ENCODE measurements at regions of chr3 and their contacts with region 1.

Region 1: GRCh38 chr3:142828703-142829305 is 60.1 kb downstream of the PCOLCE2 start:
- DNase-seq: peak; percentile 70
- ATAC-seq: peak; percentile 100
- H3K4me3 ChIP-seq: no peak overlapping the region
- H3K27ac ChIP-seq: no peak overlapping the region
- H3K4me1 ChIP-seq: no peaks in the 10 kb centered on the region
- H3K27me3 ChIP-seq: peaks cover 15% of the 10 kb centered on the region
- CTCF ChIP-seq: peak; percentile 82
- POLR2A ChIP-seq: no peak
- RAD21 ChIP-seq: peak; percentile 87

Region 2: GRCh38 chr3:142418926-142419592 is 409.7 kb before region 1 on chr3:
- CTCF ChIA-PET with region 1: no interaction called
- POLR2A ChIA-PET with region 1: no interaction called
- dilution Hi-C with region 1: no loop called
- in situ Hi-C with region 1: no loop called
- intact Hi-C with region 1: no loop called
- DNase-seq: no peak
- ATAC-seq: no peak
- H3K4me3 ChIP-seq: no peak overlapping the region
- H3K27ac ChIP-seq: no peak overlapping the region
- H3K4me1 ChIP-seq: no peaks in the 10 kb centered on the region
- H3K27me3 ChIP-seq: no peaks in the 10 kb centered on the region
- CTCF ChIP-seq: no peak
- POLR2A ChIP-seq: no peak
- RAD21 ChIP-seq: no peak

Region 3: GRCh38 chr3:142467768-142468167 is 361.0 kb before region 1 on chr3:
- CTCF ChIA-PET with region 1: no interaction called
- POLR2A ChIA-PET with region 1: no interaction called
- dilution Hi-C with region 1: no loop called
- in situ Hi-C with region 1: no loop called
- intact Hi-C with region 1: no loop called
- DNase-seq: no peak
- ATAC-seq: no peak
- H3K4me3 ChIP-seq: no peak overlapping the region
- H3K27ac ChIP-seq: no peak overlapping the region
- H3K4me1 ChIP-seq: no peaks in the 10 kb centered on the region
- H3K27me3 ChIP-seq: no peaks in the 10 kb centered on the region
- CTCF ChIP-seq: no peak
- POLR2A ChIP-seq: no peak
- RAD21 ChIP-seq: no peak

Region 4: DNA sequence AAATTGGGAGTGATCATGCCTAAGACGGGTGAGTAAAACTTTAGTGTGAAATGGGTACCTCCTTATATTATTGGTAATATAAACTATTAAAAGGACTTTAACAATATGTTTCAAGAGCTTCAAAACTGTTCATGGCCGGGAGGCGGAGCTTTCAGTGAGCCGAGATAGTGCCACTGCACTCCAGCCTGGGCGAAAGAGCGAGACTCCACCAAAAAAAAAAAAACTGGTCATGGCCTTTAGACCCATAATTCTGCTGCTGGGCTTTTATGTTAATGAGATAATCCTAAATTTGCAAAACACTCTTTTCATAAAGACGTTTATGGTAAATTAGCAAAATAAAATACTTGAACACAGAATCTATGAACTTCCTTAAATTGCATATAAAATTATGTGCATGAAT is 82.2 kb before region 1 on chr3:
- CTCF ChIA-PET with region 1: no interaction called
- POLR2A ChIA-PET with region 1: no interaction called
- dilution Hi-C with region 1: no loop called
- in situ Hi-C with region 1: no loop called
- intact Hi-C with region 1: no loop called
- DNase-seq: no peak
- ATAC-seq: no peak
- H3K4me3 ChIP-seq: no peak overlapping the region
- H3K27ac ChIP-seq: no peak overlapping the region
- H3K4me1 ChIP-seq: no peaks in the 10 kb centered on the region
- H3K27me3 ChIP-seq: no peaks in the 10 kb centered on the region
- CTCF ChIP-seq: no peak
- POLR2A ChIP-seq: no peak
- RAD21 ChIP-seq: no peak

Region 5: DNA sequence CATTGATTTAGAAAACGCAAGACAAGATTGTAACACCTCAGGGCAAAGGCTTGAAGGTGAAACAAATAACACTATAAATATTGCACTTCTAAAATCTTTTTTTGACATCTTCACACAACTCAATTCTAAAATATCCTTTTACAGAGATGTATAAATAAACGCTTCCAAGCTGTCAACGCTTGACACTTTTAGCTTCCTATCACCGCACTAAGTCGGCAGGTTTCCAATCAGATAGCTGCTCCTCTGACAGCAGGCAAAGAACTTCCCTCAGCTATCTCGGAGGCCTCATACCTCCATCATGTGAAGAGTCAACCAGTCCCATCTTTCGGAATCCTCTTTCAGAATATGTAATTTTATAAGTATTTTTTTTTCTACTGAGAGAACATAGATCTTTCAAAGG is 10.9 kb before region 1 on chr3:
- CTCF ChIA-PET with region 1: interaction called, 12 read pairs
- POLR2A ChIA-PET with region 1: no interaction called
- dilution Hi-C with region 1: no loop called
- in situ Hi-C with region 1: no loop called
- intact Hi-C with region 1: no loop called
- DNase-seq: no peak
- ATAC-seq: no peak
- H3K4me3 ChIP-seq: no peak overlapping the region
- H3K27ac ChIP-seq: no peak overlapping the region
- H3K4me1 ChIP-seq: no peaks in the 10 kb centered on the region
- H3K27me3 ChIP-seq: peaks cover 7% of the 10 kb centered on the region; the same call in 1 of the 2 replicates
- CTCF ChIP-seq: no peak
- POLR2A ChIP-seq: no peak
- RAD21 ChIP-seq: no peak

Region 6: GRCh38 chr3:142987080-142987700 is 158.4 kb after region 1 on chr3:
- CTCF ChIA-PET with region 1: interaction called, 6 read pairs
- POLR2A ChIA-PET with region 1: no interaction called
- dilution Hi-C with region 1: no loop called
- in situ Hi-C with region 1: loop called (anchors 5 kb)
- intact Hi-C with region 1: loop called (anchors 1 kb)
- DNase-seq: peak; percentile 55
- ATAC-seq: peak; percentile 65
- H3K4me3 ChIP-seq: no peak overlapping the region
- H3K27ac ChIP-seq: no peak overlapping the region
- H3K4me1 ChIP-seq: no peaks in the 10 kb centered on the region
- H3K27me3 ChIP-seq: peaks cover 17% of the 10 kb centered on the region
- CTCF ChIP-seq: peak; percentile 68
- POLR2A ChIP-seq: no peak
- RAD21 ChIP-seq: peak; percentile 63

Region 7: GRCh38 chr3:142993958-142994442 is 165.2 kb after region 1 on chr3:
- CTCF ChIA-PET with region 1: interaction called, 6 read pairs
- POLR2A ChIA-PET with region 1: no interaction called
- dilution Hi-C with region 1: no loop called
- in situ Hi-C with region 1: loop called (anchors 5 kb)
- intact Hi-C with region 1: loop called (anchors 1 kb)
- DNase-seq: peak; percentile 72
- ATAC-seq: peak; percentile 66
- H3K4me3 ChIP-seq: no peak overlapping the region
- H3K27ac ChIP-seq: no peak overlapping the region
- H3K4me1 ChIP-seq: peaks cover 2% of the 10 kb centered on the region; the same call in 1 of the 2 replicates
- H3K27me3 ChIP-seq: no peaks in the 10 kb centered on the region; the same call in 1 of the 2 replicates
- CTCF ChIP-seq: peak; percentile 78
- POLR2A ChIP-seq: no peak
- RAD21 ChIP-seq: peak; percentile 81

Region 8: GRCh38 chr3:143763564-143764162 is 934.9 kb after region 1 on chr3:
- CTCF ChIA-PET with region 1: no interaction called
- POLR2A ChIA-PET with region 1: no interaction called
- dilution Hi-C with region 1: no loop called
- in situ Hi-C with region 1: no loop called
- intact Hi-C with region 1: loop called (anchors 1 kb)
- DNase-seq: peak; percentile 13
- ATAC-seq: peak; percentile 70
- H3K4me3 ChIP-seq: no peak overlapping the region
- H3K27ac ChIP-seq: no peak overlapping the region
- H3K4me1 ChIP-seq: no peaks in the 10 kb centered on the region
- H3K27me3 ChIP-seq: no peaks in the 10 kb centered on the region
- CTCF ChIP-seq: peak; percentile 36
- POLR2A ChIP-seq: no peak
- RAD21 ChIP-seq: peak; percentile 37

Measured in IMR-90 (cell line).